ENCODE measurements at regions of chr21 and their contacts with region 1.

Region 1: GRCh38 chr21:16082038-16082816 is 352.4 kb downstream of the USP25 start:
- DNase-seq: no peak
- ATAC-seq: peak in 1 of 2 donors; percentile 42
- H3K4me3 ChIP-seq: no peak overlapping the region
- H3K27ac ChIP-seq: no peak overlapping the region
- H3K4me1 ChIP-seq: no peaks in the 10 kb centered on the region
- H3K27me3 ChIP-seq: no peaks in the 10 kb centered on the region
- CTCF ChIP-seq: peak; percentile 32

Region 2: DNA sequence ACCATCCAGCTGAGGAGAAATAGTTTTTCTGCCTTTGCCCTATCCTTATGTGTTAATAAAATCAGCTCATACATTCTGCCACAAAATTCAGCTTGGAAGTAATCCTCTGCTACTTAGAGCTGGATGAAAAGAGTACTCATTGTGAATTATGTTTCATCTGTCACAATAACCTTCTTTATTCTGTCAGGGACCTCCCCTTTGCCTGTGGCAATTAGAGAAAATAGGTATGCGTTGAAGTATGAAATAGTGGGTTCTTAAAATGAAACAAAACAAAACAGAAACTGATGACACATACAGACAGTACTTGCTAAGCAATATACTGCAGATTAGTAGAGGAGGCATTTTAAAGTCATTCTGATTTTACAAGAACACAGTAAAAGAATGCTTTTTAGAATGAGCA is 226.0 kb after region 1 on chr21:
- intact Hi-C with region 1: no loop called
- DNase-seq: no peak
- ATAC-seq: no peak
- H3K4me3 ChIP-seq: peak overlapping the region; percentile 4
- H3K27ac ChIP-seq: no peak overlapping the region
- H3K4me1 ChIP-seq: no peaks in the 10 kb centered on the region
- H3K27me3 ChIP-seq: no peaks in the 10 kb centered on the region
- CTCF ChIP-seq: no peak

Region 3: GRCh38 chr21:16330082-16330907 is 248.1 kb after region 1 on chr21:
- intact Hi-C with region 1: loop called (anchors 5 kb)
- DNase-seq: no peak
- ATAC-seq: peak; percentile 78 to 95
- H3K4me3 ChIP-seq: no peak overlapping the region
- H3K27ac ChIP-seq: no peak overlapping the region
- H3K4me1 ChIP-seq: no peaks in the 10 kb centered on the region
- H3K27me3 ChIP-seq: no peaks in the 10 kb centered on the region
- CTCF ChIP-seq: peak; percentile 71

Measured in lower lobe of right lung (tissue), 2 donors.